Panc1 (cell line): ENCODE measurements at regions of chr7 and their contacts with region 1.

Region 1: GRCh38 chr7:74106846-74107245 is 23.2 kb downstream of the LIMK1 start:
- DNase-seq: no peak
- ATAC-seq: no peak
- H3K4me3 ChIP-seq: no peak overlapping the region
- H3K27ac ChIP-seq: no peak overlapping the region
- H3K4me1 ChIP-seq: no peaks in the 10 kb centered on the region
- H3K27me3 ChIP-seq: no peaks in the 10 kb centered on the region
- CTCF ChIP-seq: no peak

Region 2: DNA sequence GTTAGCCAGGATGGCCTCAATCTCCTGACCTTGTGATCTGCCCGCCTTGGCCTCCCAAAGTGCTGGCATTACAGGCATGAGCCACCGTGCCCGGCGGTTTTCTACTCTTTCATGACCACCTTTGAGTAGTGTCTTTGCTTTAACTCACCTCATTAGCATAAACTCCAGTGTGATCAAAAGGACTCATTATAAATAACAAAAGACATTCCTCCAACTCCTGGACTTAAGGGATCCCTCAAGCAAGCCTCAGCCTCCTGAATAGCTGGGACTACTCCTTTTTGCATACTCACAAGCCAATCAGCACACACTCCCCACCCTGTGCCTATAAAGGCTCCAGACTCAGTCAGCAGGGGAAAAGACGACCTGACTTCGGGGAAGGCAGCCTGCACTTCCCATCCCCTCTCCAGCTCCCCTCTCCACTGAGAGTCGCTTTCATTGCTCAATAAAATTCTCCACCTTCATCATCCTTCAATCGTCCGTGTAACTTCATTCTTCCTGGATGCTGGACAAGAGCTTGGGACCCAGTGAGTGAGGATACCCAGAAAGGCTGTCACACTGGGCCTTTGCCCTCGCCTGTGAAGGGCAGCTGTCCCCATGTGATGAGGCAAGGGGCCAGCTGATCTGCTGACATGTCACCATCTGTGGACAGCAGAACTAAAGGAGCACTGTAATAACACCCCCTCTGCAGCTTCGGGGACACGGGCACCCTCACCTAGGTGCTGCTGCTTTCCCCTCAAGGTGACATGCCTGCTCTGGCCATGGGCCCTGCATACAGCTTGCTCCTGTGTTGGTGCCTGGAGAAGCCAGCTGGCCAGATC is 32.4 kb after region 1 on chr7:
- CTCF ChIA-PET with region 1: interaction called, 10 read pairs
- POLR2A ChIA-PET with region 1: no interaction called
- in situ Hi-C with region 1: no loop called
- intact Hi-C with region 1: no loop called
- DNase-seq: no peak
- ATAC-seq: peak; percentile 30; the same call in 1 of the 2 replicates
- H3K4me3 ChIP-seq: no peak overlapping the region
- H3K27ac ChIP-seq: no peak overlapping the region
- H3K4me1 ChIP-seq: no peaks in the 10 kb centered on the region
- H3K27me3 ChIP-seq: no peaks in the 10 kb centered on the region
- CTCF ChIP-seq: no peak

Region 3: DNA sequence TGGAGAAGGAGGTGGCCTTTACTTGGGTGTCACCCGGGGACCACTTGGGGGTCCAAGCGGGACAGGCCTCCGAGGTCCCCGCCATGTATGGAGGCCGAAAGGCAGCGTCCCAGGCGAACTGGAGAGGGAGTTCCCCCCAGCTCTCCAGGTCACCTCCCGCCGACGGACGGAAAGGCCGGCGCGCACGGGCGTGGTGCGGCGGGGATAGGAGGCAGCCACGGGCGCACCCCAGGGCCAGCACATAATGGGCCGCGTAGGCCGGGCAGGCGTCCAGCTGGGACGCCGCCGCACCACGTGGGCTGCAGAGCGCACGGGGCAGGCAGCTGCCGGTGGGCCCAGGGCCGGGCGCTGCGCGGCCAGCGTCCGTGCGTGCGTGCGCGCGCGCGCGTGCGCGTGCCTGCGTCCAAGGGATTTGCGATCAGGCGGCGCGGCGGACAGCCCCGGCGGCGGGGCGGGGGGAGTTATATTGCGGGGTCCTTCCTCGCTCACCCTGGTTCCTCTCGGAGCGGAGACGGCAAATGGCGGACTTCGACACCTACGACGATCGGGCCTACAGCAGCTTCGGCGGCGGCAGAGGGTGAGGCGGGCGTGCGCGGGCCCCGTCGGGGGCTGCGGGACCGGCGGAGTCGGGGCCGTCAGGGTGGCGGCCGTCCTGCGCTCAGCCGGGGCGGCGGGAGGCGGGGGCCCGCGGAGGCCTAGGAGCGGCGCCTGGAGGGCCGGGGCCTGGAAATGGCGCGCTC is 67.2 kb after region 1 on chr7 and contains the start of gene EIF4H:
- CTCF ChIA-PET with region 1: no interaction called
- POLR2A ChIA-PET with region 1: interaction called, 11 read pairs
- in situ Hi-C with region 1: no loop called
- intact Hi-C with region 1: loop called (anchors 10 kb)
- DNase-seq: peak; percentile 79
- ATAC-seq: peak; percentile 97
- H3K4me3 ChIP-seq: peak within 1 kb of the TSS; percentile 93 to 99
- H3K27ac ChIP-seq: peak within 1 kb of the TSS; percentile 98
- H3K4me1 ChIP-seq: peaks cover 31% of the 10 kb centered on the region
- H3K27me3 ChIP-seq: no peaks in the 10 kb centered on the region
- CTCF ChIP-seq: no peak
- total RNA-seq, gene EIF4H: 318 TPM